ENCODE measurements at regions of chr5 and their contacts with region 1.

Region 1: GRCh38 chr5:134586866-134587524 is 45.6 kb downstream of the SAR1B start:
- DNase-seq: peak; percentile 75
- H3K4me3 ChIP-seq: no peak overlapping the region
- H3K27ac ChIP-seq: no peak overlapping the region
- H3K4me1 ChIP-seq: peaks cover 3% of the 10 kb centered on the region
- H3K27me3 ChIP-seq: no peaks in the 10 kb centered on the region
- CTCF ChIP-seq: peak; percentile 97
- POLR2A ChIP-seq: no peak

Region 2: DNA sequence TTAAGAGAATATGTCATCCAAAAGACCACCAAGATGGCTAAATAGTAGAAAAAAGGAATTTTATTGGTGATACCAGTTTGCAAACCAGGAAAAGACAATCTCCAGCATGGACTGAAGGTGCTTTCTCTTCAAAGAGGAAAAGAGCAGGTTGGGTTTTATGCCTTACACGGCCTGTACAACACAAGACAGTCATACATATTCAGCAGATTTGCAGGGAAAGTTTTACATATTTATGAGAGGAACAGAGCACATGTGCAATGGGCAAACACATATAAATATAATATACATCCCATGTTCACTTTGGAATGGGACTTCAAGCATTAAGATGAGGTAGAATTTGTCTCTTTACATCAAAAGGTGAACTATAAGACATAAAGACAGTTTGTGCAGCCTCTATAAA is 290.8 kb before region 1 on chr5:
- CTCF ChIA-PET with region 1: interaction called, 40 read pairs
- POLR2A ChIA-PET with region 1: no interaction called
- dilution Hi-C with region 1: no loop called
- intact Hi-C with region 1: no loop called
- DNase-seq: no peak
- H3K4me3 ChIP-seq: no peak overlapping the region
- H3K27ac ChIP-seq: no peak overlapping the region
- H3K4me1 ChIP-seq: no peaks in the 10 kb centered on the region
- H3K27me3 ChIP-seq: peaks cover 0 to 1% of the 10 kb centered on the region in 2 experiments
- CTCF ChIP-seq: no peak
- POLR2A ChIP-seq: no peak

Region 3: GRCh38 chr5:134370871-134371833 is 215.8 kb before region 1 on chr5 and contains the start of gene UBE2B:
- CTCF ChIA-PET with region 1: interaction called, 11 read pairs
- POLR2A ChIA-PET with region 1: interaction called, 4 read pairs
- dilution Hi-C with region 1: no loop called
- intact Hi-C with region 1: no loop called
- DNase-seq: peak; percentile 99
- H3K4me3 ChIP-seq: peak within 1 kb of the TSS; percentile 91 to 94 (median 93)
- H3K27ac ChIP-seq: peak within 1 kb of the TSS; percentile 97
- H3K4me1 ChIP-seq: peaks cover 11% of the 10 kb centered on the region
- H3K27me3 ChIP-seq: no peaks in the 10 kb centered on the region
- CTCF ChIP-seq: no peak
- POLR2A ChIP-seq: peak; percentile 90
- total RNA-seq, gene UBE2B: 109 and 110 TPM in 2 replicates

Region 4: DNA sequence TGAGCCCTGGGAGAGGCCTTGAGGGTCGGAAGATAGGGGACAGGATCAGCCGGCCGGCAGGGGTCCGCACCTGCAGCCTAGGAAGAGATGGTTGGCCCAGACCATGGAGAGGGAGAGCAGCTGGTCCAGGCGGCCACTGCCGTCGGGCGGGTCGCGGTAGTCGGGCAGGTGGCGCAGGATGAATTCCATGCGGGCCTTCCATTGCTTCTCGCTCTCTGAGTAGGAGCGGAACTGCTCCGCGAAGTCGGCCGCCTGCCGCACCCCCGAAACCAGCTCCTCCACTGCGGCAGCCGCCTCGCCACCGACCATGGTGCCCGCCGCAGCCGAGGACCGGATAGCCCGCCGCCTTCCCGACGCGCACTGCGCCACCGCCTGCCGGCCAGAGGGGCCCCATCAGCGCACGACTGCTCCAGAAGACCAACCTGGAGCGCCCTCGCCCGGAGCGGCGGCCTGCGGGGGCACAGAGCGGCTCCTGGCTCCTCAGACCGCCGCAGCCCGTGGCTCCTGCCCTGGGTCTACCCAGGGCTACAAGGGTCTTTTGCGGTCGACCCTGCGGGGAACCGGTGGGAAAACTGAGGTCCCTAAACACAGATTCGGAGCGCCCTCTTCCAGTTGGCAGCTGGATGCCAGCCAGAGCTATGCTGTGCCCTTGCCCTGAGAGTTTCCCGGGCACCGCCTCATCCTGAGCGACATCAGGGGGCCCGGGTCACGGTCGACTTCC is 175.3 kb before region 1 on chr5 and contains the start of gene CDKN2AIPNL:
- CTCF ChIA-PET with region 1: interaction called, 38 read pairs
- POLR2A ChIA-PET with region 1: no interaction called
- dilution Hi-C with region 1: no loop called
- intact Hi-C with region 1: loop called (anchors 2 kb)
- DNase-seq: peak; percentile 86
- H3K4me3 ChIP-seq: peak within 1 kb of the TSS; percentile 75 to 88 (median 84)
- H3K27ac ChIP-seq: peak within 1 kb of the TSS; percentile 40
- H3K4me1 ChIP-seq: peaks cover 15% of the 10 kb centered on the region
- H3K27me3 ChIP-seq: no peaks in the 10 kb centered on the region
- CTCF ChIP-seq: peak; percentile 71 to 86
- POLR2A ChIP-seq: peak; percentile 86
- total RNA-seq, gene CDKN2AIPNL: 35.1 and 36.5 TPM in 2 replicates

Region 5: DNA sequence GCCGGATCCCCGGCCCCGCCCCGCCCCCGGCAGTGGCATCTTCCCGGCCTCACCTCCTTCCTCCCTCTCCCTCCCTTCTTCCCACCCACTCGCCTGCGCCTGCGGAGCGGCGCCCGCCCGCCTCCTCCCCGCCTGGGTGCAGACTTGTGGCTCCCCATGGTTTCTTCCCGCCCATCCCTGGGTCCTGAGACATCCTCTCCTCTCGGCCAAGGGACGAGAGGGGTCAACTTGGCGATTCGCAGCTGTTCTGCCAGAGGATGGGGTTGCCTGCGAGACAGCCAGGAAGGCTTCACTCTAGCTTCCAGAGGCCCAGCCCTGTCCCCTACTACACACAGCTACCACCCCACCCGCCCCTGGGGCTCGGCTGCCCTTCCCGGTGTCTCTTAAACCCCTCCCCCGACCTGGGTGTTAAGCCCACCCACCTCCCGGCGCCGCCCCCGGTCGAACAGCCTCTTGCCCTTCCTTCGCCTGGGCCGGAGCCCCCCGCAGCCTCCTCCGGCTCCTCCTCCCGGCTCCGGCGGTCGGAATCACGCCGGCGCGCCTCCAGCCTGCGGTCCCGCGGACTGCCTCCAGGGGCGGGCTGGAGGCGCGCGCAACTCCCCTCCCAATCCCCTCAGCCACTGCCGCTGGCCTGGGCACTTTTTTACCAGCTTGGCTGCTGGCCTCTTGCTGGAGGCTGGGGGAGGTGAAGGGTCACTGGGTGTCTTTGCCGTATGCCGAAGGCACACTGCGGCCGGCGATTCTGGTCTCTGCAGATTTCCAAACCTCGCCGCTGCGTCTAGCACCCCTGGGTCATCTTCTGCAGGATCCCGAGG is 59.6 kb before region 1 on chr5:
- CTCF ChIA-PET with region 1: interaction called, 30 read pairs
- POLR2A ChIA-PET with region 1: interaction called, 3 read pairs
- dilution Hi-C with region 1: no loop called
- intact Hi-C with region 1: no loop called
- DNase-seq: peak; percentile 84
- H3K4me3 ChIP-seq: peak overlapping the region; percentile 3 to 76 (median 46)
- H3K27ac ChIP-seq: peak overlapping the region; percentile 56
- H3K4me1 ChIP-seq: peaks cover 20% of the 10 kb centered on the region
- H3K27me3 ChIP-seq: no peaks in the 10 kb centered on the region
- CTCF ChIP-seq: peak; percentile 75 to 90
- POLR2A ChIP-seq: peak; percentile 46

Region 6: DNA sequence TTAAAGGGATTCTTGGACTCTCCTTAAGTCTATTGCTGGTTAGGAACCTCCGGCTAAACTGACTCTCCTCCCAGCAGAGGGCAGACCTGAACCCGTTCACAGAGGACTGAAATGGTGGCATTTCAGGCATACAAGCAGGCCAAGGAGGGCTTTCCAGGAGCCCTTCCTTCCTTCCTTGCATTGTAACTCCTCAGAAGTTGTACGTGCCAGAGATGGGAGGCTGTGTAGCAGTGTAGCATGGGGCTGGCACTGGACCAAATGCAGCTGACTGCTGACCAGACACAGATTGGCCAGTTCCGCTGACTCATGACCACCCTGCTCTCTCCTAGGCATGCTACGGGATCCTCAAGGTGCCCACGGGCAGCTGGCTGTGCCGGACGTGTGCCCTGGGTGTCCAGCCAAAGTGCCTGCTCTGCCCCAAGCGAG is 25.1 kb before region 1 on chr5:
- CTCF ChIA-PET with region 1: interaction called, 112 read pairs
- POLR2A ChIA-PET with region 1: no interaction called
- dilution Hi-C with region 1: no loop called
- intact Hi-C with region 1: loop called (anchors 1 kb)
- DNase-seq: peak; percentile 98
- H3K4me3 ChIP-seq: no peak overlapping the region
- H3K27ac ChIP-seq: peak overlapping the region; percentile 47
- H3K4me1 ChIP-seq: peaks cover 20% of the 10 kb centered on the region
- H3K27me3 ChIP-seq: no peaks in the 10 kb centered on the region
- CTCF ChIP-seq: peak; percentile 75 to 86
- POLR2A ChIP-seq: peak; percentile 47

Region 7: GRCh38 chr5:134603059-134603458 is 16.1 kb after region 1 on chr5:
- CTCF ChIA-PET with region 1: interaction called, 35 read pairs
- POLR2A ChIA-PET with region 1: no interaction called
- dilution Hi-C with region 1: no loop called
- intact Hi-C with region 1: no loop called
- DNase-seq: no peak
- H3K4me3 ChIP-seq: no peak overlapping the region
- H3K27ac ChIP-seq: no peak overlapping the region
- H3K4me1 ChIP-seq: no peaks in the 10 kb centered on the region
- H3K27me3 ChIP-seq: no peaks in the 10 kb centered on the region
- CTCF ChIP-seq: no peak
- POLR2A ChIP-seq: no peak